ENCODE measurements at regions of chr19 and their contacts with region 1.

Region 1: GRCh38 chr19:33373701-33374421 is at the start of gene CEBPG:
- DNase-seq: peak in 5 of 7 donors; percentile 52 to 67 (median 60)
- H3K4me3 ChIP-seq: peak within 1 kb of the TSS; percentile 49 to 97 (median 50)
- H3K27ac ChIP-seq: peak within 1 kb of the TSS in 4 of 5 donors; percentile 93 to 99 (median 94)
- H3K4me1 ChIP-seq: peaks cover 0 to 36% of the 10 kb centered on the region in 2 donors
- H3K27me3 ChIP-seq: no peaks in the 10 kb centered on the region
- CTCF ChIP-seq: peak in 3 of 6 experiments; percentile 10 to 47 (median 32)
- POLR2A ChIP-seq: peak; percentile 78 to 83
- total RNA-seq, gene CEBPG: 8.9 to 21.9 (median 10.9) TPM

Region 2: GRCh38 chr19:33302175-33302973 is 71.5 kb before region 1 on chr19 and contains the start of gene CEBPA:
- intact Hi-C with region 1: loop called in 1 of 2 experiments (anchors 10 kb)
- DNase-seq: peak in 6 of 7 donors; percentile 54 to 69 (median 62)
- H3K4me3 ChIP-seq: peak within 1 kb of the TSS in 3 of 4 donors; percentile 11 to 65 (median 45)
- H3K27ac ChIP-seq: peak within 1 kb of the TSS in 2 of 5 donors; percentile 61 to 69
- H3K4me1 ChIP-seq: peaks cover 0 to 24% of the 10 kb centered on the region in 2 donors
- H3K27me3 ChIP-seq: no peaks in the 10 kb centered on the region
- CTCF ChIP-seq: peak in 3 of 6 experiments; percentile 54 to 82 (median 57)
- POLR2A ChIP-seq: peak; percentile 75 to 88
- total RNA-seq, gene CEBPA: 1.6 to 24.6 (median 8.1) TPM

Measured in adrenal gland (tissue), 19 donors.